Posterior vena cava (tissue), 2 donors: ENCODE measurements at regions of chr5 and their contacts with region 1.

Region 1: GRCh38 chr5:143134900-143135299 is 268.6 kb downstream of the NR3C1 start:
- DNase-seq: no peak

Region 2: DNA sequence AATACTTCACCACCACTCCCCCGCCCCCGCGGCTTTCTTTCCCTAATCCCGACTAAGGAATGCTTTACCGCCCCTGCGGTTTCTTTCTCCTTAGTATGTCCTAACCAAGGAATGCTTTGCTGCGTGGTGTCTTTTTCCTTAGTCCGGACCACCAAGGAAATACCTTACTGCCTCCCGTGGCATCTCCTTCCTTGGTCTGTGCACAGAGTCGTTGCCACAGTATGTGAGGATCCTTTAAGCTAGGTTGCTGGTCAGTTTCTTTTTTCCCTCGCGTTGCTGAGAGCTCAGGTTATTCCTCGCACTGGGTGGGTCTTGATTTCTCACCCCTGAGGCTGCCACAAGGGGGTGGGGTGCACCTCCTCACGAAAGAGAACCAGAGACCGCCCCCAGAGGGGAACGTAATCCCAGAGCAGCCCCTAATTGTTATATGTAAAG is 40.8 kb before region 1 on chr5:
- intact Hi-C with region 1: no loop called
- DNase-seq: no peak

Region 3: DNA sequence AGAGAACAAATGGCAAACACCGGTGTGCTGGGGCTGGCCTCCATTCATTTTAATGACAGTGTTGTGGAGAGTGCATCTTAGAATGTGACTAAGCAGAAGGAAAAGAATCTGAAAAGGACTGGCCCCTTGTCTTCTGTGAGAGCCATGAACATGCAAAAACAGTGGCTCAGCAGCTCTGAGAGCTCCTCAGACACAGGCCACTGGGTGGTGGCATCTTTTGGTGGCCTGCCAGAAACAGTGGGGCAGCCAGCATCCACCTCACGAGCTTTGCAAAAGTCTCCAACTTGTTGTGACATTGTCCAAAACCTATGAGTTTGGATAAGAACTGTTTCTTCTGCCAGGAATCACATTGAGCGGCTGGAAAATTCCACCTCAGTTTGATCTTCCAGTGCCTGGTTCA is 35.2 kb after region 1 on chr5:
- intact Hi-C with region 1: loop called in 1 of 2 experiments (anchors 2 kb)
- DNase-seq: no peak

Region 4: DNA sequence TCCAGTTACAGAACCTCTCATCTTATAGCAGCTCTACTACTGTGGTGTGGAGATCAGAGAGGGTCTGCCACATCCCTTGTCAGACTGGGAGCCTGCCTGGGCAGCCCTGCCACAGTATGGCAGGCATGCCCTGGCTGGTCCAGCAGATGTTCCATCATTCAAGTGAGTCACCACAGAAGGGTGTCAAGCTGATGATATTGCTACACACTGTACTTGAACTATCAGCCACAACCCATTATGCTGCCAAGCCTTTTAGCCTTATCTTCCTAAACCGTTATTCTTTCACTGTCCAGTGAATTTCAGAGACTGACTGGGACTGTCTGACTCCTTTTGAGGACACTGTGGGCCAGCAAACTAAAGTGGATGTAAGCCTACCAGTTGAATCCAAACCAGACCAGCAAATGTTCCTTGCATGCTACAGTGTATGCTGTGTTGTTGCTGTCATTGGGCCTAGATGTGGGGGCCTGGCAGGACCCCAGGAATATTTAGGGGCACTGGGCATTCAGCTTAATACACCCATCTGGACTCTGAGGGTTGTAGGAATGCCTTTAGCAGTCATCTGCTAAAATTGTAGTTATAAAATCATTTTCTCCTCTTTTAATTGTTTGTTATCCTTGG is 66.0 kb after region 1 on chr5:
- intact Hi-C with region 1: no loop called
- DNase-seq: no peak

Region 5: GRCh38 chr5:143372187-143372829 is 237.4 kb after region 1 on chr5:
- intact Hi-C with region 1: loop called in 1 of 2 experiments (anchors 5 kb)
- DNase-seq: no peak